ENCODE measurements at regions of chr11 and their contacts with region 1.

Region 1: GRCh38 chr11:20158597-20159257 is 1.5 kb downstream of the DBX1 start:
- DNase-seq: peak in 1 of 9 donors; percentile 4
- ATAC-seq: no peak
- H3K4me3 ChIP-seq: no peak overlapping the region
- H3K4me3 Mint-ChIP-seq: peak overlapping the region; percentile 19 to 89 (median 56)
- H3K27ac ChIP-seq: no peak overlapping the region
- H3K27ac Mint-ChIP-seq: peak overlapping the region in 5 of 9 donors; percentile 17 to 79 (median 26)
- H3K4me1 ChIP-seq: peaks cover 5 to 9% of the 10 kb centered on the region in 2 donors
- H3K4me1 Mint-ChIP-seq: peaks cover 26 to 63% (median 50%) of the 10 kb centered on the region in 7 donors
- H3K27me3 ChIP-seq: peaks cover 12 to 39% of the 10 kb centered on the region in 2 donors
- H3K27me3 Mint-ChIP-seq: peaks cover 59 to 87% (median 74%) of the 10 kb centered on the region in 5 donors

Region 2: DNA sequence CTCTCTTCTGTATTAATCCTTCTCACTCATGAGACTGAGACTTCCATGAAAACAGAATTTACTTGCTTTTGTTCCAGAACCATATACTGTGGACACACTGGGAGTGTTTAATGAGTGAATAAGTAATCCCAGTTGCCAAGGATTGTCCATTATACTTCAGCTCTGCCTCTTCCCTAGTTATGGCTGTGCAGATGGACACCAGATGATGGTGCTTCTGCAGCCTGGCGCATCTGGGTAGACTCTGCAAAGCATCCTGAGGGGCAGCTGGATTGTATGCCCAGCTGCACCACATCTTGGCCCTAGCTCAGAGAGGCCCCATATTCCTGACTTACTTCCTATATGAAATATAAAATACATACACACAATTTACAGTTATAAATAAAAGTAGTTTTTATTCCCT is 41.9 kb before region 1 on chr11:
- CTCF ChIA-PET with region 1: no interaction called
- POLR2A ChIA-PET with region 1: no interaction called
- intact Hi-C with region 1: no loop called
- DNase-seq: no peak
- ATAC-seq: no peak
- H3K4me3 ChIP-seq: no peak overlapping the region
- H3K4me3 Mint-ChIP-seq: no peak overlapping the region
- H3K27ac ChIP-seq: no peak overlapping the region
- H3K27ac Mint-ChIP-seq: no peak overlapping the region
- H3K4me1 ChIP-seq: no peaks in the 10 kb centered on the region
- H3K4me1 Mint-ChIP-seq: peaks cover 0 to 2% (median 0%) of the 10 kb centered on the region in 7 donors
- H3K27me3 ChIP-seq: no peaks in the 10 kb centered on the region
- H3K27me3 Mint-ChIP-seq: peaks cover 6 to 34% (median 29%) of the 10 kb centered on the region in 5 donors

Region 3: GRCh38 chr11:20363500-20364411 is 205.0 kb after region 1 on chr11 and contains the start of gene HTATIP2:
- CTCF ChIA-PET with region 1: no interaction called
- POLR2A ChIA-PET with region 1: interaction called, 4 read pairs
- intact Hi-C with region 1: loop called in 1 of 2 experiments (anchors 10 kb)
- DNase-seq: peak; percentile 62 to 78 (median 72)
- ATAC-seq: peak; percentile 92
- H3K4me3 ChIP-seq: peak within 1 kb of the TSS; percentile 73
- H3K4me3 Mint-ChIP-seq: peak within 1 kb of the TSS; percentile 88 to 96 (median 94)
- H3K27ac ChIP-seq: peak within 1 kb of the TSS; percentile 77
- H3K27ac Mint-ChIP-seq: peak within 1 kb of the TSS; percentile 87 to 97 (median 93)
- H3K4me1 ChIP-seq: peaks cover 27 to 29% of the 10 kb centered on the region in 2 donors
- H3K4me1 Mint-ChIP-seq: peaks cover 33 to 75% (median 72%) of the 10 kb centered on the region in 7 donors
- H3K27me3 ChIP-seq: no peaks in the 10 kb centered on the region
- H3K27me3 Mint-ChIP-seq: no peaks in the 10 kb centered on the region
- total RNA-seq, gene HTATIP2: 12.0 to 47.1 (median 38.6) TPM

Region 4: GRCh38 chr11:20599221-20600019 is 440.7 kb after region 1 on chr11 and contains the start of gene SLC6A5:
- CTCF ChIA-PET with region 1: no interaction called
- POLR2A ChIA-PET with region 1: no interaction called
- intact Hi-C with region 1: loop called in 1 of 2 experiments (anchors 1 kb)
- DNase-seq: peak in 1 of 9 donors; percentile 38
- ATAC-seq: no peak
- H3K4me3 ChIP-seq: no peak within 1 kb of the TSS
- H3K4me3 Mint-ChIP-seq: peak within 1 kb of the TSS in 1 of 10 donors; percentile 44
- H3K27ac ChIP-seq: no peak within 1 kb of the TSS
- H3K27ac Mint-ChIP-seq: peak within 1 kb of the TSS in 1 of 9 donors; percentile 50
- H3K4me1 ChIP-seq: no peaks in the 10 kb centered on the region
- H3K4me1 Mint-ChIP-seq: peaks cover 0 to 13% (median 8%) of the 10 kb centered on the region in 7 donors
- H3K27me3 ChIP-seq: peaks cover 0 to 7% of the 10 kb centered on the region in 2 donors
- H3K27me3 Mint-ChIP-seq: peaks cover 82 to 96% (median 90%) of the 10 kb centered on the region in 5 donors
- total RNA-seq, gene SLC6A5: not detected

Measured in naive thymus-derived CD4-positive, alpha-beta T cell (primary cell).